Colonic mucosa (tissue), 4 donors: ENCODE measurements at regions of chr22 and their contacts with region 1.

Region 1: DNA sequence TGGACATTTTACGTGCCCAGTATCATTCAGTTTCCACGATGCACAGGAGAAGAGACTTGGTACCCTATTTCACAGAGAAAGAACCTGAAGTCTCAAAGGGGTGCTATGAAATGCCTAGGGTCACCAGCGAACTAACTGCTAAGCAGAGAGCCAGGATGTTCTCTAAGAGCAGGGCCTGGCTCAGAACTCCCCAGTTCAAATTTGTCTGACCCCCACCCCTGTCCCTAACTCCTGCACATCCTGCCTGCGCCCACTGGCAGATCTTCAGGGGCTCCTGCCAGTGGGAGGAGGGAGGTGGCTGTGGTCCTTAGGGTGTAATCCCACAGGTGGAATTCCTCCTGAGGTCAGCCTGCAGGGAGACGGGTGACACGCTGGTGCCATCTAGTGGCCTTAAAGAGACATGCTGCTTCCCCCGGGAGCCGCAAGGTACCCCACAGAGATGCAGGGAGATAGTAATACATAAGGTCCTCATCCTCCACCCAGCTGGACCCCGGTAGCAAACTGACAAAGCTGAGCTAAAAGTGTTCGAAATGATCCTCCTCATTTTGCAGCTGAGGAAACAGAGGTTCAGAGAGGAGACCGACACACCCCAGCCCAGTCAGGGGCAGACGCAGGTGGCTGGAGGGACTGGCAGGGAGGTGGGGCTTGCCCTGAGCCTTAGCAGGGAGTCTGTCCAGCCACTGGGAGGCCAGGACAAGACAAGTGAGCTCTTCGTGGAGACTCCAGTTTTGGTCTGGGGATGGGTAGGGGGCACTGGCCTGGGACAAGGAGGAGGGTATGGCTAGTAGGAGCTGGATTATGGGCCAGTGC is 34.1 kb downstream of the MB start:
- DNase-seq: peak; percentile 54
- H3K4me3 ChIP-seq: no peak overlapping the region
- H3K27ac ChIP-seq: no peak overlapping the region
- H3K4me1 ChIP-seq: no peaks in the 10 kb centered on the region
- H3K27me3 ChIP-seq: no peaks in the 10 kb centered on the region
- CTCF ChIP-seq: peak; percentile 87

Region 2: GRCh38 chr22:35430897-35431322 is 152.2 kb before region 1 on chr22:
- intact Hi-C with region 1: loop called (anchors 1 kb)
- DNase-seq: peak; percentile 90
- H3K4me3 ChIP-seq: no peak overlapping the region
- H3K27ac ChIP-seq: peak overlapping the region; percentile 32
- H3K4me1 ChIP-seq: no peaks in the 10 kb centered on the region
- H3K27me3 ChIP-seq: no peaks in the 10 kb centered on the region
- CTCF ChIP-seq: peak; percentile 97